Breast epithelium (tissue), 4 donors: ENCODE measurements at regions of chr5 and their contacts with region 1.

Region 1: GRCh38 chr5:5306696-5307095 is 115.8 kb upstream of the ICE1 start:
- DNase-seq: no peak
- H3K4me3 ChIP-seq: no peak overlapping the region
- H3K27ac ChIP-seq: no peak overlapping the region
- H3K4me1 ChIP-seq: no peaks in the 10 kb centered on the region
- H3K27me3 ChIP-seq: no peaks in the 10 kb centered on the region
- CTCF ChIP-seq: no peak
- POLR2A ChIP-seq: no peak

Region 2: GRCh38 chr5:4684946-4685345 is 621.8 kb before region 1 on chr5:
- intact Hi-C with region 1: loop called (anchors 10 kb)
- DNase-seq: no peak
- H3K4me3 ChIP-seq: no peak overlapping the region
- H3K27ac ChIP-seq: no peak overlapping the region
- H3K4me1 ChIP-seq: no peaks in the 10 kb centered on the region
- H3K27me3 ChIP-seq: no peaks in the 10 kb centered on the region
- CTCF ChIP-seq: no peak
- POLR2A ChIP-seq: no peak

Region 3: DNA sequence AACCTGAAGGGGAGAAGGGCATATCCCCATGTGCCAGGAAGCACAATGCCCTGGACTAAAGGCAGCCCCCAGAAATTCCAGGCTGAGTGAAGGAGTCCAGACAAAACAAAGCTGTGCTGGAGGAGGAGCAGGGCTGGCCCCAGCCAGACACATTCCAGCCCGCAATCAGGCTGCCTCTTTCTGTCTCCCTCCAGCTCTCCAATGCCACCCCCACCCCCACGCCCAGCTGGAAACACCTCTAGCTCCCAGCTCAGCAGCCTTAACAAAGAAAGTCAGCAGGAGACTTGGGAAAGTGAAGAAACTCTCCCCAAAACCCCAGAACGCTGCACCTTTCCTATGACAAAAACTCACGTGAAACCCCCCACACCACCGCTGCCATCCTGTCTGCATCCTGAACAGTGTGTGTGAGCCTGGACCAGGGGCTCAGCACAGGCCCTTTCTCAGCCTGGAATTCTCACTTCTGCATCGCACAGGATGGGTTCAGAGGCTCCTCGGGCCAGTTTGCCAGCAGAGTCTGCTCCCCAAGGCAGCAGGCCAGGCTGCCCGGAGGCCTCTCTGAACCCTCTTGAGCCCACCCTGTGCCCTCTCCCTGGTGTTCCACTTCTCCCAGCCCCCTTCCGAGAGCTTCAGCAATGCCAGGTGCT is 19.5 kb after region 1 on chr5:
- intact Hi-C with region 1: no loop called
- DNase-seq: no peak
- H3K4me3 ChIP-seq: no peak overlapping the region
- H3K27ac ChIP-seq: no peak overlapping the region
- H3K4me1 ChIP-seq: no peaks in the 10 kb centered on the region
- H3K27me3 ChIP-seq: no peaks in the 10 kb centered on the region
- CTCF ChIP-seq: no peak
- POLR2A ChIP-seq: no peak

Region 4: DNA sequence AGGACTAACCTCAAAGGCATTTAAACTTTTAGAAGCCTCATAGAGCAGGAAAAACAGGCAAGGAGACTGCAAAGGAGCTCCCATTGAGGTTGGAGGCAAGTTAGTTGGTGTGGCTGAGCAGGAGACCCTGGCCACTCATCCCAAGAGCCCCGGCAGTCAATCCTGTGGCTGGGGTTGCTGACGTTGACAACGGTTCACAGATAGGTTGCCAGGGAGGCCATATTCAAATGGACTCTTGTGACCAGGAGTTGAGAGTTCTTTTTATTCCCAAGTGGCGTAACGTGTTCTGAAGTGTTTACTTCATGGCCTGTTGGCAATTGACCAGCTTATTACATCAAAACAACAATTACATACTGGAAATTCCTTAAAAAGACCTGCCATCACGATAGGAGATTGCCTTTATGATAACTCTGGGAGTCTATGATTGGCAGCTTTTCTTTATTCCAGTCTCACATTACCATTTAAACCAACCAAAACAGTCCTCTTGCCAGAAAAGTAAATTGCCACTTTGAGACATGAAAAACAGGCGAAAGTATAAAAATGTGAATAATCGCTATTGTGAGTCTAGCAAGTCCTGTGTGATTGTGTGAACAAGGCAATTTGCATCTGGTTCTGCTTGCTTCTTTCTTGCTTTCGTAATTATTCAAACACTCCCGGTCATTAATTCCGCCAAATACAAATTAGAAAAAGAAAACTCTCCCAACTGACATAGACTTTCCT is 676.7 kb after region 1 on chr5:
- intact Hi-C with region 1: no loop called
- DNase-seq: no peak
- H3K4me3 ChIP-seq: no peak overlapping the region
- H3K27ac ChIP-seq: no peak overlapping the region
- H3K4me1 ChIP-seq: no peaks in the 10 kb centered on the region
- H3K27me3 ChIP-seq: no peaks in the 10 kb centered on the region
- CTCF ChIP-seq: no peak
- POLR2A ChIP-seq: no peak